Caco-2 (cell line): ENCODE measurements at regions of chr13 and their contacts with region 1.

Region 1: GRCh38 chr13:26253787-26254582 is at the start of gene CDK8:
- DNase-seq: peak; percentile 94
- H3K4me3 ChIP-seq: peak within 1 kb of the TSS; percentile 96
- H3K4me3 Mint-ChIP-seq: peak within 1 kb of the TSS; percentile 89
- H3K27ac Mint-ChIP-seq: peak within 1 kb of the TSS; percentile 91
- H3K4me1 ChIP-seq: no peaks in the 10 kb centered on the region
- H3K4me1 Mint-ChIP-seq: peaks cover 17% of the 10 kb centered on the region
- H3K27me3 ChIP-seq: no peaks in the 10 kb centered on the region
- H3K27me3 Mint-ChIP-seq: no peaks in the 10 kb centered on the region
- CTCF ChIP-seq: peak in 1 of 2 experiments; percentile 1
- total RNA-seq, gene CDK8: 35.1 and 35.9 TPM in 2 replicates

Region 2: DNA sequence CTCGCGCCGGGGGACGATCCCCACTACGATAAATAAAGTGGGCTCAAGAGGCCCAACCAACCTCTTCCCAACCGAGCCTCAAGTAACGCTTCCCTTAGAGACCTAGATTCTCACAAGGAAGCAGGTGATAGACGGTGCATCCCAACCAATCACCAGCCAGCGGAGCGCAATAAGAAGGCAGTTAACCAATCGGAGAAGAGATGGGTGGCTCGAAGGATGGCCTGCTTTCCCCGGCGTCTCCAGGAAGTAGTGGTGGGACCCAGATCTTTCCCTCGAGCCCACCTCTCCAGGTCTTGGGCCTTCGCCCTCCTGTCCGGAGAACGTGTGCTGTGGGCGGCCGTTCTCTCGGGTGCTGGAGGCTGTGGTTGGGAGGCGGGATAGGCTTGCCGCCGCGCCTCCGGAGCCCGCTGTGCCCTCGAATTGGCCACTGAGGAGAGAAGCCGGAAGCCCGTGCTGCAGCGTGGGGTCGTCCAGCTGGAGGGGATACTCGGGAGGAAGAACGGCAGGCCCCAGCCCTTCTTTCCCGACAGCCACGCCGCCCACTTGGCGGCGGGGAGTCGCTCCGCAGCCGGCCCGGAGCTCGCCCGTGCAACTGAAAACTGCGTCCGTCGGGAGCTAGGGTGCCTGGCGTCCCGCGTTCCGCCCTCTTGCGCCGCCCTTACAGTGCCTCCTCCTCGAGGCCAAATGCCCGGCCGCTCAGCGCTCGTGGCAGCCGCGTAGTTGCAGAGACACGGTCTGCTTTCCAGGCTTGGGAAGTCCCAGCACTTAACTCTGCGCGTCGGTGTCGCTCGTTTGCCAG is 32.1 kb before region 1 on chr13 and contains the start of gene RNF6:
- CTCF ChIA-PET with region 1: no interaction called
- POLR2A ChIA-PET with region 1: no interaction called
- intact Hi-C with region 1: loop called (anchors 1 kb)
- DNase-seq: peak; percentile 95 to 98
- H3K4me3 ChIP-seq: peak within 1 kb of the TSS; percentile 79
- H3K4me3 Mint-ChIP-seq: peak within 1 kb of the TSS; percentile 95
- H3K27ac Mint-ChIP-seq: peak within 1 kb of the TSS; percentile 94
- H3K4me1 ChIP-seq: peaks cover 8% of the 10 kb centered on the region
- H3K4me1 Mint-ChIP-seq: peaks cover 11% of the 10 kb centered on the region
- H3K27me3 ChIP-seq: no peaks in the 10 kb centered on the region
- H3K27me3 Mint-ChIP-seq: no peaks in the 10 kb centered on the region
- CTCF ChIP-seq: no peak
- total RNA-seq, gene RNF6: 39.1 and 41.4 TPM in 2 replicates

Region 3: GRCh38 chr13:26362261-26362660 is 108.3 kb after region 1 on chr13:
- CTCF ChIA-PET with region 1: no interaction called
- POLR2A ChIA-PET with region 1: no interaction called
- intact Hi-C with region 1: loop called (anchors 10 kb)
- DNase-seq: no peak
- H3K4me3 ChIP-seq: no peak overlapping the region
- H3K4me3 Mint-ChIP-seq: no peak overlapping the region
- H3K27ac Mint-ChIP-seq: no peak overlapping the region
- H3K4me1 ChIP-seq: peaks cover 22% of the 10 kb centered on the region
- H3K4me1 Mint-ChIP-seq: peaks cover 19% of the 10 kb centered on the region
- H3K27me3 ChIP-seq: no peaks in the 10 kb centered on the region
- H3K27me3 Mint-ChIP-seq: no peaks in the 10 kb centered on the region
- CTCF ChIP-seq: no peak

Region 4: DNA sequence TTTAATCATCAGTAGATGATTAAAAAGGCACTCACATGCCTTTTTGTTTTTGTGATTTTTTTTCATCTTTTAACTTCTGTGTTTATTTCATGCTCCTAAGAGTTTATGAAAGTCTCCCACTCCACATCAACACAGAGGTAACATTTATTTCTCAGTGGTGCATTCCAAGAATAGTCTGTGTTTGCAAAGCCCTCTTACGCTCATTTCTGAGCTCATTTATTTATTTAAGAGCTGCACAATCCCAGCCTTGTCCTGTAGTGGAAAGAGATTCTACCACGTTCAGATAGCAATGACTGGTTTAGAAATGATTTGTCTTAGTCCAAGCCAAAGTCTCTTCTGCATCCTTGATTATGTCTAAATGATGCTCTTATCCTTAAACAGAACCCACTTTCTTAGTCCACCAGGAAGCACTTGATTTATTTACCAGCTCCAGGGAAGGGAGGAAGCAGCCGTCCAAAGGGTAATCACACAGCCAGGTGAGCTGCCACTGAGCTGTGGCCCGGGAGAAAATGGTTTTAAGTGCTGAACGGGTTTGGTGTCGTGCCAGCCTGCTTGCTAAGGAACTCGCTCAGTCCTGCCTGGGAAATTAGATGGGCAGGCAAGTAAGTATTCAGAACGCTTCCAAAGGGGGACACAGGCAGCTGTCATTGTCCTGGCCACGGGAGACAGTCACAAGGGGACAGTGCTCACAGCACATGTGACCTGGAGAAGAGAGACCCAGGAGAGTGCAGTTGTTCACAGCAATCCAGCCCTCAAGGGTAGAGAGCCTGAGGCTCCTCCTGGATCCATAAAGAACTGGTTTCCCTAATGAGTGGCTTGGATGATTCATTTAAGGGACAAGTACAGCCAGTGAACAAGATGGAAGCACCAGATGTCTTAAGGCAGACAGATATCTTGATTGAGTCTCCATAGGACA is 171.7 kb after region 1 on chr13:
- CTCF ChIA-PET with region 1: no interaction called
- POLR2A ChIA-PET with region 1: no interaction called
- intact Hi-C with region 1: loop called (anchors 10 kb)
- DNase-seq: no peak
- H3K4me3 ChIP-seq: no peak overlapping the region
- H3K4me3 Mint-ChIP-seq: peak overlapping the region; percentile 6
- H3K27ac Mint-ChIP-seq: peak overlapping the region; percentile 19
- H3K4me1 ChIP-seq: peaks cover 21% of the 10 kb centered on the region
- H3K4me1 Mint-ChIP-seq: peaks cover 24% of the 10 kb centered on the region
- H3K27me3 ChIP-seq: no peaks in the 10 kb centered on the region
- H3K27me3 Mint-ChIP-seq: no peaks in the 10 kb centered on the region
- CTCF ChIP-seq: no peak